ENCODE measurements at regions of chr21 and their contacts with region 1.

Region 1: DNA sequence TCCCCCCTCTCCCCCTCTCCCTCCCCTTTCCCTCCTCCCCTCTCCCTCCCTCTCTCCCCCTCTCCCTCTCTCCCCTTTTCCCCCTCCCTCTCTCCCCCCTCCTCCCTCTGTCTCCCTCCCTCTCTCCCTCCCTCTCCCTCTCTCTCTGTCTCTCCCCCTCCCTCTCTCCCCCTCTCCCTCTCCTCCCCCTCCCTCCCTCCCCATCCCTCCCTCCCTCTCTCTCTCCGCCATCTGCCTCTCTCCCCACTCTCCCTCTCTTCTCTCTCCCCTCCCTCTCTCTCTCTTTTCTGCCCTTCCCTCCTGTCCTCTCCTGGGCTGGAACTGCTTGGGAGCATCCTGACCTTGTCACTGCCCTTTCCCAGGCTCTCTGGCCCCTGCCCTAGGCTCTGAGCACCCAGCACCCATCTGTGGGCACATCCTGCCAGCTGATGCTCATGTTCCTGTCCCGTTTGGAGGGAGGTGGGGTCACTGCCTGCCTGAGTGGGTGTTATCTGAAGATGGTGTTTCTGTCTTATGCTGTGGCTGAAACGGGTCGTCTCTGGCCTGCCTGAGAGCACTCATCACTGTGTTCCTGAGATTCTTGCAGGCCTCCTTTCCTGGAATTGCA is 10.8 kb downstream of the FTCD start:
- DNase-seq: no peak
- H3K4me3 ChIP-seq: no peak overlapping the region
- H3K4me3 Mint-ChIP-seq: peak overlapping the region in 3 of 8 donors; percentile 15 to 49 (median 38)
- H3K27ac ChIP-seq: no peak overlapping the region
- H3K27ac Mint-ChIP-seq: peak overlapping the region in 4 of 7 donors; percentile 2 to 85 (median 60)
- H3K4me1 ChIP-seq: peaks cover 5% of the 10 kb centered on the region
- H3K4me1 Mint-ChIP-seq: peaks cover 4 to 8% (median 5%) of the 10 kb centered on the region in 4 donors
- H3K27me3 ChIP-seq: no peaks in the 10 kb centered on the region
- H3K27me3 Mint-ChIP-seq: no peaks in the 10 kb centered on the region

Region 2: GRCh38 chr21:46184625-46185555 is 40.3 kb after region 1 on chr21:
- CTCF ChIA-PET with region 1: interaction called, 6 read pairs
- POLR2A ChIA-PET with region 1: no interaction called
- intact Hi-C with region 1: loop called (anchors 2 kb)
- DNase-seq: peak; percentile 63 to 80 (median 66)
- H3K4me3 ChIP-seq: peak overlapping the region; percentile 42
- H3K4me3 Mint-ChIP-seq: peak overlapping the region; percentile 76 to 91 (median 84)
- H3K27ac ChIP-seq: peak overlapping the region; percentile 53
- H3K27ac Mint-ChIP-seq: peak overlapping the region; percentile 19 to 88 (median 77)
- H3K4me1 ChIP-seq: peaks cover 5% of the 10 kb centered on the region
- H3K4me1 Mint-ChIP-seq: peaks cover 1 to 11% (median 6%) of the 10 kb centered on the region in 4 donors
- H3K27me3 ChIP-seq: peaks cover 4% of the 10 kb centered on the region
- H3K27me3 Mint-ChIP-seq: peaks cover 2 to 3% of the 10 kb centered on the region in 2 donors